Caco-2 (cell line): ENCODE measurements at regions of chr3 and their contacts with region 1.

Region 1: DNA sequence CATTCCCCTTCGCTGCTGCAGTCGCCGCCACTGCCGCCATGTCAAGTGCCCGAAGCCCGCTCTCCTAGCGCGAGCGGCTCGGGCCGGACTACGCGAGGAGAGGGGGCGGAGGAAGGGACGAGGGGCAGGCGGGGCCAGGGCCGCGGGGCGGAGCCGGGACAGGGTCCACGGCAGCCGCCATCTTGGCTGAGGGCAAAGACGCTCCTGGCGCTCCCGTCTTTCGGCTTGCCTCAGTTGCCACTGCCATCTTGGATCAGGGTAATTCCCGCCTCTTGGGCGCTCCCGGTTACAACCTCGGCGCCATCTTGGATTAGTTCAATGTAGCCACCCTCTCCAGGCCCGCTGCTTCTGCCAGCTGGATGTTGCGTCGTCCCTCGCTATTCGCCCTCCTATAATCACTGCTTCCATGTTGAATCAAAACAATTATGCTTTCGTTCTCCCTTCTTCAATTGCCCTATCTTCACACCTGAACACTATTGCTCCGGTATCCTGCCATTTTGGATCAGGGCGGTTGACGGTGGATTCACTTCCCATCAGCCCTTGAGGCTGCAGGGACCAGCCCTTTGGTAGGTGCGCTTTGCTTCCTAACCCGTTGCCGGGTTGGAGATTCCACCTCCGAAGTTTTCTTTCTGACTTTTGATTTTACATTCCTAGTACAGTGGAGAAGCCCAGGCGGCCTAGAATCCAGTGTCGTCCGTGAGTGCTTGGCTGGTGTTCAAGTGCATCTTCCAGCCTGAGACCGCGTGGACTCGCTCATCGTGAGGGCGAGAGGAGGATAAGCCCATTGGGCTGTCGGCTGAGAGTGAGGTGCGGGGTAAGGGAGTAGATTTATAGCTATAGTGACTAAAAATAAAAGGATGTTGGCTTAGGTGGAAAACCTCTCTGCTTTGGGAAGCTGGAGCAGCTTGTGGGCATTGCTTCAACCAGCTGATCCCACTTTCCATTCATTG is at the start of gene HACD2:
- DNase-seq: peak; percentile 97
- H3K4me3 ChIP-seq: peak within 1 kb of the TSS; percentile 71
- H3K4me3 Mint-ChIP-seq: no peak within 1 kb of the TSS
- H3K27ac Mint-ChIP-seq: no peak within 1 kb of the TSS
- H3K4me1 ChIP-seq: peaks cover 22% of the 10 kb centered on the region
- H3K4me1 Mint-ChIP-seq: peaks cover 12% of the 10 kb centered on the region
- H3K27me3 ChIP-seq: no peaks in the 10 kb centered on the region
- H3K27me3 Mint-ChIP-seq: no peaks in the 10 kb centered on the region
- CTCF ChIP-seq: no peak
- total RNA-seq, gene HACD2: 84.7 and 92.5 TPM in 2 replicates

Region 2: GRCh38 chr3:123605789-123606234 is 20.5 kb after region 1 on chr3:
- CTCF ChIA-PET with region 1: interaction called, 4 read pairs
- POLR2A ChIA-PET with region 1: interaction called, 22 read pairs
- intact Hi-C with region 1: loop called (anchors 1 kb)
- DNase-seq: peak; percentile 85 to 91
- H3K4me3 ChIP-seq: no peak overlapping the region
- H3K4me3 Mint-ChIP-seq: peak overlapping the region; percentile 68
- H3K27ac Mint-ChIP-seq: peak overlapping the region; percentile 85
- H3K4me1 ChIP-seq: peaks cover 71% of the 10 kb centered on the region
- H3K4me1 Mint-ChIP-seq: peaks cover 24% of the 10 kb centered on the region
- H3K27me3 ChIP-seq: no peaks in the 10 kb centered on the region
- H3K27me3 Mint-ChIP-seq: no peaks in the 10 kb centered on the region
- CTCF ChIP-seq: no peak

Region 3: DNA sequence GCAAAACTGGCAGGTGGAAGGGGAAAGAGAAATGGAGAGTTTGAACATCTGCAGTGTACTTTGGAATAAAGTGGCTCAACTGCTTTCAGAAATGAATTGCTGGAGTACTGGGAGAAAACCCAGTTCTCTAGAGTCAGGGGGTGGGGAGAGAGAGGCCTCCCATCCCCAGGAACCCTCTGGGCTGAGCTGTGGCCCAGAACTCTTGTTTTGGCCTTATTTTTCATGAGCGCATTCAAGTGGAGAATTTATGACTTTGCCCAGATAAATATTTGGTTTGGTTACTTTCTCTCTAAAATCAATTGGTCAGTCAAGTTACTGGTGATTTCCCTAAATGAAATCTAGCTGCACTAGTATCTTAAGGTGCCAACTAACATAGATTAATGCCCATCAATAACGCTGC is 28.3 kb after region 1 on chr3:
- CTCF ChIA-PET with region 1: no interaction called
- POLR2A ChIA-PET with region 1: interaction called, 11 read pairs
- intact Hi-C with region 1: no loop called
- DNase-seq: no peak
- H3K4me3 ChIP-seq: no peak overlapping the region
- H3K4me3 Mint-ChIP-seq: no peak overlapping the region
- H3K27ac Mint-ChIP-seq: no peak overlapping the region
- H3K4me1 ChIP-seq: peaks cover 8% of the 10 kb centered on the region
- H3K4me1 Mint-ChIP-seq: peaks cover 6% of the 10 kb centered on the region
- H3K27me3 ChIP-seq: no peaks in the 10 kb centered on the region
- H3K27me3 Mint-ChIP-seq: no peaks in the 10 kb centered on the region
- CTCF ChIP-seq: no peak

Region 4: DNA sequence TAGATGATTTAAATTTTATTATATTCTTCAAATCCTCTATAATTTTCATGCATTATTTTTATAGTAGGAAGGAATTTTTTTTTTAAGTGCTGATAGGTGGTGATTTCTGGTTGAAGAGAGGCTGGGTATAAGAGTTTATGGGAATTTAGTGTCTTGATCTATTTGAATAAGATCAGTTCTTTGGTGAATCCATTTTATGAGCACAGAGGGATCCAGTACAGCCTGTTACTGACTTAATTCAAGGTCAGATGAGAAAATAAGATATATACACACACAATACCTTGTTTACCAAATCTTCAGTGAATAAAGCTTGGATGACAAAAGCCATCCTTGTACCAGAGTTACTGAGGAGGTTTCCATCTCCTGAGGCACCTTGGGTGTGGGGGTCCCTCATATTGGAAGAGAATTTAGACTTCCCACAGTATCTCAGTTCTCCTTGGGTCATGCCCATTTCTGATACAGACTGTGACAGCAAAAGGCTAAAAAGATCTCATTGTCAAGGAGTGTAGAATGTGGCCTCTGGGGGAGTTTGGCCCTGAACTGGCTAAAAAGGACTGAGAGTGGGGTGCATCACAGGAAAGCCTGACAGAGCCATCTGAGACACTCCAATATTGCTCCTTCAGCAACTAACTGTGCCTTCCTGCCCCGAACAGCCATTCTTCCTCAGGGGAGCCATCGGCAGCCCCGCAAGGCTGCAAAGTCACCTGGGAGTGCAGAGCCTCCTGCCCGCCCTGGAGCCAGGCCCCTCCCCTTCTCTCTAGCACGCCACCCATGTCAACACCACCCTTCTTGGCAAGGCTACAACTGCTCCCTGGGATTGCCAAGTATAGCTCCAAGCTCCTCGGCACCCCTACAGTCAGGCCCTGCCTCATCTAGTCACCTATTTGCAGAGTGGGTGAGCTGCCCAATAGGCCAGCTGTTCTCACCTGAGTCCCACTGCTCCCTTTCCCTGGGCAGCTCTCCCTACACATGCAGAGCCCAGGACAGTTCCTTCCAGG is 42.7 kb after region 1 on chr3:
- CTCF ChIA-PET with region 1: no interaction called
- POLR2A ChIA-PET with region 1: no interaction called
- intact Hi-C with region 1: loop called (anchors 2 kb)
- DNase-seq: no peak
- H3K4me3 ChIP-seq: no peak overlapping the region
- H3K4me3 Mint-ChIP-seq: no peak overlapping the region
- H3K27ac Mint-ChIP-seq: no peak overlapping the region
- H3K4me1 ChIP-seq: peaks cover 6% of the 10 kb centered on the region; the same call in 1 of the 2 replicates
- H3K4me1 Mint-ChIP-seq: peaks cover 17% of the 10 kb centered on the region
- H3K27me3 ChIP-seq: no peaks in the 10 kb centered on the region
- H3K27me3 Mint-ChIP-seq: no peaks in the 10 kb centered on the region
- CTCF ChIP-seq: no peak